Colonic mucosa (tissue), 4 donors: ENCODE measurements at regions of chr4 and their contacts with region 1.

Region 1: GRCh38 chr4:94590493-94590892 is 138.8 kb downstream of the PDLIM5 start:
- DNase-seq: no peak
- H3K4me3 ChIP-seq: no peak overlapping the region
- H3K27ac ChIP-seq: no peak overlapping the region
- H3K4me1 ChIP-seq: no peaks in the 10 kb centered on the region
- H3K27me3 ChIP-seq: no peaks in the 10 kb centered on the region
- CTCF ChIP-seq: no peak

Region 2: GRCh38 chr4:94389595-94390290 is 200.8 kb before region 1 on chr4:
- intact Hi-C with region 1: no loop called
- DNase-seq: no peak
- H3K4me3 ChIP-seq: no peak overlapping the region
- H3K27ac ChIP-seq: no peak overlapping the region
- H3K4me1 ChIP-seq: no peaks in the 10 kb centered on the region
- H3K27me3 ChIP-seq: no peaks in the 10 kb centered on the region
- CTCF ChIP-seq: no peak

Region 3: DNA sequence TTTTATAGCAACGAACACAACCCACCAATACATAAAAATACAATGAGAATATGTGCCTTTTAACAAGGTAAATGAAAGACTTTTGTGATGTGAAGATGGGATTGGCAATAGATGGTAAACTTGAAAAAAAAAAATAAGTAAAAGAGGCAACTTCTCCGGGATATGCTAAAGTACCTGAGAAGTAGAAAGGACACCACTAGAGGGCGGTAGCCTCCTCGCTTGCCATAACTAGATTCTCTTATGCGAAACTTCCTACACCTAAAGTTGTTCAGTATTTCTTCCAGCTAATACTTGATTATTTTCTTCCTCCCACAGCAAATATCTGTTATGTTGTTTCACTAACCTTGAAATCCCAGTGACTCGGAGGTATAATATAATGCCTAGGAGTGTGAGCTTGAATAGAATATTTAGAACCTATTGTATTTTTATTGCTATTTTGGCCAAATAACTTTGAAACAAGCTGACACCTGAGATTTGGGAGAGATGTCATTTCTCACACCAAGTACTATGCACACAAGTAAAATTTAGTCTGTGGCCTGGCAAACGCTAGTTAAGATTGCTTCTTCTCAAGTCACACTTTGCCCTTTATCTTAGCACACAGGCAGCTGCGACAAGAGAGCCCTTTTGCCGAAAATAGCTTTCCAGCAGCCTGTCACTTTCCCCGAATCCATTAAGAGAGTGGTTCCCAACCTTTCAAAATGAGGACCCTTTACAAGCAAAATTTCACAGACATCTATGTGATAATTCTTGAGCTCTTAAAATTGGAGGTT is 183.6 kb before region 1 on chr4:
- intact Hi-C with region 1: loop called (anchors 2 kb)
- DNase-seq: peak; percentile 79
- H3K4me3 ChIP-seq: no peak overlapping the region
- H3K27ac ChIP-seq: no peak overlapping the region
- H3K4me1 ChIP-seq: no peaks in the 10 kb centered on the region
- H3K27me3 ChIP-seq: no peaks in the 10 kb centered on the region
- CTCF ChIP-seq: peak; percentile 86

Region 4: GRCh38 chr4:94814237-94814636 is 223.7 kb after region 1 on chr4:
- intact Hi-C with region 1: no loop called
- DNase-seq: no peak
- H3K4me3 ChIP-seq: no peak overlapping the region
- H3K27ac ChIP-seq: no peak overlapping the region
- H3K4me1 ChIP-seq: no peaks in the 10 kb centered on the region
- H3K27me3 ChIP-seq: no peaks in the 10 kb centered on the region
- CTCF ChIP-seq: no peak